Activated CD4-positive, alpha-beta memory T cell treated with anti-CD3 and anti-CD28 coated beads, Interleukin-2, amount 10 ng/mL, durations not matched to agents 7 days and 5 days (primary cell): ENCODE measurements at regions of chr14 and their contacts with region 1.

Region 1: DNA sequence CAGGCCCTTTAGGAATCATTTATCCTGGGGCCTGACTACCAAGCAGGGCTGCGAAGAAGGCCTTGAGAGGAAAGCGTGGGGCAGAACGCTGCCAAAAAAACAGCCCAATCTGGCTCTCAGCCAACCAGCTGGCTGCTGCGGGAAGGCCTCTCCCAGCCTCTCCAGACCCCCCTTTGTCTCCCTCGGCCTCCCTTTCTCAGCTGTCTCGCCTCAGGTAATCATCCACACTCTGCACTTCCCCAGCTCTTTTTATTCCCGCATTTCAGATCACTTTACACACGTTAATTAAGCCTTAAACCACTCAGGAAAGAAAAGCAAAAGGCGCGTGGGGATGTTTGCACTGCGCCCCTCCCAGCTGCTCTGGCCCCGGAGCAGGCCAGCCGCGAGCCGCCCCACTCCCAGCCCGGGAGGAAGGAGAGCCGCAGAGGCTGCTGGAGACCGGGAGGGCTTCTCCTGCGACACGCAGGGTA is 208.2 kb upstream of the FOXN3 start:
- DNase-seq: no peak
- H3K4me3 Mint-ChIP-seq: no peak overlapping the region
- H3K27ac Mint-ChIP-seq: no peak overlapping the region
- H3K4me1 Mint-ChIP-seq: peaks cover 52% of the 10 kb centered on the region
- H3K27me3 Mint-ChIP-seq: no peaks in the 10 kb centered on the region

Region 2: GRCh38 chr14:89578156-89578555 is 47.1 kb before region 1 on chr14:
- CTCF ChIA-PET with region 1: no interaction called
- POLR2A ChIA-PET with region 1: no interaction called
- DNase-seq: no peak
- H3K4me3 Mint-ChIP-seq: no peak overlapping the region
- H3K27ac Mint-ChIP-seq: no peak overlapping the region
- H3K4me1 Mint-ChIP-seq: no peaks in the 10 kb centered on the region
- H3K27me3 Mint-ChIP-seq: no peaks in the 10 kb centered on the region

Region 3: DNA sequence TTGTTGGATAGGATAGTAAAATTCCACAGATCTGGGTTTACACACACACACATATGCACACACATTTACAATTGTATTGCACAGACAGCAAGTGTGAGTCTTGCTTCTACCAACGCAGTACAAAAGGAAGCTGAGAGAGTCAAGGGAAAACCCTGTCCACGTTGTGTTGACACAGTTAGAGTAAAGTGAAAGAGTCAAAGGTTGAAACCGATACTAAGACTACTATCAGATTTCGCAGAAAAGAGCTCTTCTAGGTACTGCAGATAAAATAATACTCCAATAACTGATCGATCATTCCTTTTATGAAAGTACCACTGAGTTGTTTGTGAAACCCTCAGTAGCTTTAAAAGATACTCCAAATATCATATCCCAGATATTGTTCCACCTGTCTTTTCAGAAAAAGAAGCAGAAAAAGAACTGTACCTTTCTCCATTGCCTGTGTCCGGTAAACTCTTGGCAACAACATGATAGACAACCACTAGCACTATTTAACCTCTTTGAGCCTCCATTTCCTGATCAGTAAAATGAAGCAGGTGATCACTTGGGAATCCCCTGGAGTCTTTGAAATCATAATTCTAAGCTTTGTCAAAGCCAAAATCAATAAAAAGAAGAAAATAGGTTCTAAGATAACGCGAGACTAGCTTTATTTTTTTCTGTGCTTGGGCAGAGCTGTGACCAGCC is 16.4 kb after region 1 on chr14:
- CTCF ChIA-PET with region 1: interaction called, 11 read pairs
- POLR2A ChIA-PET with region 1: interaction called, 113 read pairs
- DNase-seq: peak; percentile 29
- H3K4me3 Mint-ChIP-seq: peak overlapping the region; percentile 49
- H3K27ac Mint-ChIP-seq: peak overlapping the region; percentile 90
- H3K4me1 Mint-ChIP-seq: peaks cover 43% of the 10 kb centered on the region
- H3K27me3 Mint-ChIP-seq: no peaks in the 10 kb centered on the region

Region 4: GRCh38 chr14:89669193-89669592 is 43.9 kb after region 1 on chr14:
- CTCF ChIA-PET with region 1: no interaction called
- POLR2A ChIA-PET with region 1: no interaction called
- DNase-seq: peak; percentile 22
- H3K4me3 Mint-ChIP-seq: no peak overlapping the region
- H3K27ac Mint-ChIP-seq: no peak overlapping the region
- H3K4me1 Mint-ChIP-seq: peaks cover 13% of the 10 kb centered on the region
- H3K27me3 Mint-ChIP-seq: no peaks in the 10 kb centered on the region

Region 5: DNA sequence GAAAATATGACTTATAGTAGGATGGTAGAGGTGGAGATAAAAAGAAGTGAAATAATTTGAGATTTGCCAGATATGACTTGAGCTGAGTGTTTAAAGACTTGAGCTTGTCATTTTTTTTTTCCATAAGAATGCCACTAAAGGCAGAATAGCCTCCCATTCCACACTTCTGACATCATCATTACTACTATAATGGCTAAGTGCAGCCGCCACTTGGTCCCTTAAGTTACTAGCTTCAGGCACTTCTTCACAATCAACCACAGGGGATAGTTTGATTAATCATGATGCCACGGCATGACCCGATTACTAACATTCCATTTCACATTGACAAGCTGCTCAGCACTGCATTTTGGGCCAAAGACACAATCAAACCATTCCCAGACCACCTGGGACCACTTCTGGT is 201.3 kb after region 1 on chr14:
- CTCF ChIA-PET with region 1: no interaction called
- POLR2A ChIA-PET with region 1: no interaction called
- DNase-seq: no peak
- H3K4me3 Mint-ChIP-seq: no peak overlapping the region
- H3K27ac Mint-ChIP-seq: no peak overlapping the region
- H3K4me1 Mint-ChIP-seq: no peaks in the 10 kb centered on the region
- H3K27me3 Mint-ChIP-seq: peaks cover 15% of the 10 kb centered on the region